Panc1 (cell line): ENCODE measurements at regions of chr10 and their contacts with region 1.

Region 1: DNA sequence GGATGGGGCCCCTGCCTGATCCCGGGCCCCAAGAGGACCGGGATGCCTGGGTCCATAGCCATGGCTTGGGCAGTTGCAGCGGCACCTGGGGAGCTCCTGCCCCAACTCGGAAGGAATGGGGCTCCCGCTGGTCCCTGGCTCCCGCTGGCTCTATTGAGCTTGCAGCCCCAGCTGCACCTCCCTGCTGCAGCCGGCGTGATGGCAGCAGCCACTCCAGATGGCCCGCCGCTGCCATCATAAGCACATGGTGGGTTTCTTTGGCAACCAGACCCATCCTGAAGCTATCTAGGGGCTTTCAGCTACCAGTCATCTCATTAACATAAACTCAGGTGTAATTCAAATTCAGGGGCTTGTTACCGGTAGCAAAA is 11.1 kb upstream of the DNMBP start:
- DNase-seq: no peak
- ATAC-seq: no peak
- H3K4me3 ChIP-seq: no peak overlapping the region
- H3K27ac ChIP-seq: peak overlapping the region; percentile 49
- H3K4me1 ChIP-seq: peaks cover 23% of the 10 kb centered on the region
- H3K27me3 ChIP-seq: no peaks in the 10 kb centered on the region
- CTCF ChIP-seq: no peak

Region 2: DNA sequence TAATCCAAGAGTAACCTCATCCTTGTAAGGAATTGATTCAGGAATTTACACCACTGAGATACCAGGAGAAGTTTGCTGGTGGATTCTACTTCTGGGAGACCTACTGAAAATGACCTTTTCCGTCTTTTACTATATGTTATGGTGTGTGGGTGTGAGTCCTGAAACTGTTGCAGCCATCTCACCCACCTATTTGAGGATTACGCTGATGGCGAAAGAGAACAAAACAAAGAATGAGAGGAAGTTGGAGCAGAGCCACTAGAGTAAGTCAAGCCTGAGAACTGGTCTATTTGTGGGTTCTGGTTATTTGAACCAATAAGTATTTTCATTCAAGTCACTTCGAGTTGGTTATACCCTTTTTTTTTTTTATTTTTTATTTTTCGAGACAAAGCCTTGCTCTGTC is 251.2 kb before region 1 on chr10:
- CTCF ChIA-PET with region 1: no interaction called
- POLR2A ChIA-PET with region 1: interaction called, 12 read pairs
- in situ Hi-C with region 1: no loop called
- intact Hi-C with region 1: no loop called
- DNase-seq: no peak
- ATAC-seq: no peak
- H3K4me3 ChIP-seq: no peak overlapping the region
- H3K27ac ChIP-seq: peak overlapping the region; percentile 45; the same call in 1 of the 2 replicates
- H3K4me1 ChIP-seq: no peaks in the 10 kb centered on the region; the same call in 1 of the 2 replicates
- H3K27me3 ChIP-seq: no peaks in the 10 kb centered on the region
- CTCF ChIP-seq: no peak

Region 3: DNA sequence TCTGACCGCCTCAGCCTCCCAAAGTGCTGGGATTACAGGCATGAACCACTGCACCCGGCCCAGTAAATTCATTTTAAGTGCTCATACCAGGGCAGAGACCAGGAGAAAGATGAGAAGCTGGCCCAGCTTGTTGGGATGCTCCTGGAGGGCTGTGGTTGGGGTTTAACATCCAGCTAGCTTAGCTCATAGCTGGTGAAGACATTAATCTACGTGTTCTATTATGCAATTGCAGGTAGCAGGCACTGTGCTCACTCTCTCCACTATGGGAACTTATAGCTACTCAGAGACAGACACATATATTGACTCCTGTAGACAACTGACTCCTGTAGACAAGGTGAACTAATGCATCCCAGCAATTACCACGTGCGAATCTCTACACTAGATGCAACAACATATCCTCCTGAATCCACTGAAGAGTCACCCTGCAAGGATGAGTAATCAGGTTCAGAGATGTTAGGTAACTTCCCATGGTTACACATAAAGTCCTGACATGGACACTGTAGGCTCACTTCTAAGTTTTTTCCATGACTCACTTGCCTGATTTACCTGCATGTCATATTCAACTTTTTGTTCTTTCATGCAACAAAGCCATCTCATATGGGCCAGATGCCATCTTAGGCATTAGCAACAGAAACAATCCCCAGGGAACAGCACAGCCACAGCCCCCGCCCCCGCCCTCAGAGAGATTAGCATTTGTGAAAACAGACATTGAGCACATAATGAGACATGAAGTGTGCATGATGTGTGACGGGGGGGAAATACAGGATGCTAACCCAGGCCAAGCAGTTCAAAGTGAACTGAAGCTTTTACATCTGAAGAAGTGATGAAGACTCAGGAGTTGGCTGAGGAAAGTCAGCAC is 127.7 kb after region 1 on chr10:
- CTCF ChIA-PET with region 1: no interaction called
- POLR2A ChIA-PET with region 1: no interaction called
- in situ Hi-C with region 1: no loop called
- intact Hi-C with region 1: no loop called
- DNase-seq: peak; percentile 51
- ATAC-seq: peak; percentile 43; the same call in 1 of the 2 replicates
- H3K4me3 ChIP-seq: no peak overlapping the region
- H3K27ac ChIP-seq: no peak overlapping the region
- H3K4me1 ChIP-seq: no peaks in the 10 kb centered on the region
- H3K27me3 ChIP-seq: no peaks in the 10 kb centered on the region
- CTCF ChIP-seq: no peak

Region 4: GRCh38 chr10:100201549-100201948 is 180.7 kb after region 1 on chr10:
- CTCF ChIA-PET with region 1: no interaction called
- POLR2A ChIA-PET with region 1: no interaction called
- in situ Hi-C with region 1: no loop called
- intact Hi-C with region 1: no loop called
- DNase-seq: no peak
- ATAC-seq: no peak
- H3K4me3 ChIP-seq: no peak overlapping the region
- H3K27ac ChIP-seq: no peak overlapping the region
- H3K4me1 ChIP-seq: no peaks in the 10 kb centered on the region
- H3K27me3 ChIP-seq: no peaks in the 10 kb centered on the region
- CTCF ChIP-seq: no peak